Mammary epithelial cell (primary cell): ENCODE measurements at regions of chr12 and their contacts with region 1.

Region 1: GRCh38 chr12:95623585-95624042 is 72.3 kb upstream of the USP44 start:
- DNase-seq: peak; percentile 68
- H3K4me3 ChIP-seq: no peak overlapping the region
- H3K27ac ChIP-seq: no peak overlapping the region
- H3K4me1 ChIP-seq: peaks cover 11% of the 10 kb centered on the region
- H3K27me3 ChIP-seq: no peaks in the 10 kb centered on the region
- CTCF ChIP-seq: peak; percentile 66 to 87

Region 2: DNA sequence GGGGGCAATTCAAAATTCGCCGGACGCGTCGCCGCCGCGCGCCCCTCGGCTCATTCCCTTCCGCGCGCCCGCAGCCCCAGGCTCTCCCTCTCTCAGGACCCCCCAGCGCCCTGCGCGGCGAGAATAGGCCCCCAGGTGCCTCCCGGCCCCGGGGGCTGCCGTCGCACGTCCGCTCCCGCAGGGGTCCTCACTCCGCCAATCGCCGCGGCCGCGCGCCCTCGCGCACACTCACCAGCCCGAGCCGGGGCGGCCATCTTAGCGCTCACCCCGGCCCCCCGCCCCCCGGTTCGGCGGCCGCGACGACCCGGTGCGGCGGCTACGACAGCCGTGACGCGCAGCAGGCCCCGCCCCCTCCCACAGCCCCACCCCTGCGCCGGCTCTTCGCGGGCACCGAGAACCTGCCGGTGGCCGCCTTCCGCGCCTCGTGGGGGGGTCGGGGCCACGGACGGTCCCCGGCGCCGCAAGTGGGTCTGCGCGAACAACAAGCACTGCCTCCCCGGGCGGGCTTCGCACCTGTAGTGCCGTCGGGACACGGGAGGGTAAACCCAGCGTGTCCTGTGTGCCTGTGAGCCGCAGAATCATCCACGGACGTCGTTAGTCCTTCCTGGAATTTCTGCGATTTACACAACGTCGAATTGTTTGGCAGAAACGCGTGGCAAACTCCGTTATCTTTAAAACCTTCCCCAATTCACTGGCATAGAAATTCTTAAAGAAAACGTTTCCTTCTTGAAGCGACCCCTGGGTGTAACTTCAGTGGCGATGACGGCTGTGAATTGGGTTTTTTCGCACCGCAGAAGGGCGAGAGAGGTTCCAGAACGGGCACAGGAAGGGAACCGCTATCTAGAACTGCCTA is 74.8 kb before region 1 on chr12:
- CTCF ChIA-PET with region 1: no interaction called
- dilution Hi-C with region 1: no loop called
- in situ Hi-C with region 1: no loop called
- intact Hi-C with region 1: no loop called
- DNase-seq: no peak
- H3K4me3 ChIP-seq: peak overlapping the region; percentile 38 to 49 (median 44)
- H3K27ac ChIP-seq: no peak overlapping the region
- H3K4me1 ChIP-seq: peaks cover 8% of the 10 kb centered on the region
- H3K27me3 ChIP-seq: peaks cover 22% of the 10 kb centered on the region
- CTCF ChIP-seq: no peak

Region 3: DNA sequence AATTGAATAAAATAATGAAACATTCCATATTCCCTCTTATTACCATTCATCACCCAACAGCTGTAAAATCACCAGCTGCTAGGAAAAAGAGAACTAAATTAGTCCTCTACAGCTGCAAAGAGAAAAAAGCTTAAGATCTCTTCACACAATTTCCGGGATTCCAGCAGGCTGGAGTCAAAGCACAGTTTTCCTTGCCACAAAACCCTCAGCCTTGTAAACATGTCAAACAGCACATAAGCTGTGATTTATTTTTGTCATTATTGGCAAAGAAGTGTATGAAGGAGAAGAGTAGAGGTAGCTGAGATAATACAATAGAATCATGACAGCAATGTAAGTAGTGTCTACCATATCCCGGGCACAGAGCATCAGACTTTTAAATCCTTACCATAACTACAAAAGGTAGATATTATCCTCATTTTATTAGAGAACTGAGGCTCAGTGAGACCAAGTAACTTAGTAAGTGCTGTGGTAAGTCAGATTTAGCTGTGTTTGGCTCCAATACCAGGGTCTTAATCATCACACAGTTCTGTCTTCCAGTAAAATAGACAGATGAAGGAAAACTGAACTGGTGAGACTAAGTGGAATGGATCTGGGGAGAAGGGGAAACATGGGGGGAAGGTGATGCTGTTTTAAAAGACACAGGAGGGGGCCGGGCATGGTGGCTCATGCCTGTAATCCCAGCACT is 109.7 kb after region 1 on chr12:
- CTCF ChIA-PET with region 1: no interaction called
- dilution Hi-C with region 1: no loop called
- in situ Hi-C with region 1: loop called in 1 of 2 experiments (anchors 10 kb)
- intact Hi-C with region 1: no loop called
- DNase-seq: peak; percentile 57
- H3K4me3 ChIP-seq: no peak overlapping the region
- H3K27ac ChIP-seq: no peak overlapping the region
- H3K4me1 ChIP-seq: peaks cover 5% of the 10 kb centered on the region
- H3K27me3 ChIP-seq: no peaks in the 10 kb centered on the region
- CTCF ChIP-seq: no peak

Region 4: GRCh38 chr12:95790033-95790911 is 166.7 kb after region 1 on chr12 and contains the start of gene NTN4:
- CTCF ChIA-PET with region 1: no interaction called
- dilution Hi-C with region 1: no loop called
- in situ Hi-C with region 1: no loop called
- intact Hi-C with region 1: loop called (anchors 1 kb)
- DNase-seq: peak; percentile 54
- H3K4me3 ChIP-seq: peak within 1 kb of the TSS; percentile 73 to 79 (median 78)
- H3K27ac ChIP-seq: peak within 1 kb of the TSS; percentile 58
- H3K4me1 ChIP-seq: peaks cover 29% of the 10 kb centered on the region
- H3K27me3 ChIP-seq: no peaks in the 10 kb centered on the region
- CTCF ChIP-seq: no peak
- total RNA-seq, gene NTN4: 38.6 to 47.2 TPM

Region 5: DNA sequence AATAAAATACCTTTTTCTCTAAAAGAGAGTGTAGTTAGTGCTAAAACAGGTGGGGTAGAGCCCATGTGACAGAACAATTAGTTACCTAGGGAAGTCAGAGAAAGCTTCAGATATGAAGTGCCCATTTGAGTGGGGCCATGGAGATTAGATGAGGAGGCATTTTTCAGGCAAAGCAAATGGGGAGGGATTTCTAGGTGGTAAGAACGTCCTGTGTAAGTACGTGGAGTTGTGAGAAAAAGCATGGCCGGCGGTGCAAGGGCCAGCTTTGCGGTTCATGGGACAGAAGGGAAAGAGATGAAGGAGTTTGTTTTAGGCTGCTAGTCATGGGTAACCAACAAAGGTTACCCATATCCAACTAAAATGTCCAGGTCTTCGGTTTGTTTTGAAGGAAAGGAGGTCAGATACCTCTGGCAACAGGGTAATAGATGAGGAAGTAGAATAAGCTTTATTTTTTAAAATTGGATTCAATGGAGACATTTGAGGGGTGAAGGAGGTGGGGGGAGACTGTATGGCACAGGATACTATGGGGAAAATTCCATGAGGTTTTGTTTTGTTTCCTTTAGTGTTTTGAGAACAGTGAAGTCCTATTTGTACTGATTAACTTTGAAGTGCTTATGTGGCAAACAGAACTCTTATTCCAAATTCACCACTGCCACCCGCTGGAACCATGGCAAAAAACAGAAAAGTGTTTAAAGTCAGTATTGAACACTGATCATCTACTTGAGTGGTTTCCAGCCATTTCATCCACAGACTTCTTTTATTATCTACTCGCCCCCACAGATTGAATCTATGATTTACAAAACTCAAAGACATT is 225.2 kb after region 1 on chr12:
- CTCF ChIA-PET with region 1: no interaction called
- dilution Hi-C with region 1: loop called (anchors 25 kb)
- in situ Hi-C with region 1: no loop called
- intact Hi-C with region 1: no loop called
- DNase-seq: peak; percentile 23
- H3K4me3 ChIP-seq: no peak overlapping the region
- H3K27ac ChIP-seq: no peak overlapping the region
- H3K4me1 ChIP-seq: no peaks in the 10 kb centered on the region
- H3K27me3 ChIP-seq: peaks cover 3% of the 10 kb centered on the region
- CTCF ChIP-seq: peak; percentile 21 to 41